ENCODE measurements at regions of chr5 and their contacts with region 1.

Region 1: GRCh38 chr5:33850100-33850594 is 41.6 kb downstream of the ADAMTS12 start:
- DNase-seq: peak; percentile 93 to 97
- H3K4me3 ChIP-seq: peak overlapping the region; percentile 31; the same call in 1 of the 2 replicates
- H3K27ac ChIP-seq: peak overlapping the region; percentile 88
- H3K4me1 ChIP-seq: peaks cover 55% of the 10 kb centered on the region
- H3K27me3 ChIP-seq: no peaks in the 10 kb centered on the region
- CTCF ChIP-seq: no peak

Region 2: DNA sequence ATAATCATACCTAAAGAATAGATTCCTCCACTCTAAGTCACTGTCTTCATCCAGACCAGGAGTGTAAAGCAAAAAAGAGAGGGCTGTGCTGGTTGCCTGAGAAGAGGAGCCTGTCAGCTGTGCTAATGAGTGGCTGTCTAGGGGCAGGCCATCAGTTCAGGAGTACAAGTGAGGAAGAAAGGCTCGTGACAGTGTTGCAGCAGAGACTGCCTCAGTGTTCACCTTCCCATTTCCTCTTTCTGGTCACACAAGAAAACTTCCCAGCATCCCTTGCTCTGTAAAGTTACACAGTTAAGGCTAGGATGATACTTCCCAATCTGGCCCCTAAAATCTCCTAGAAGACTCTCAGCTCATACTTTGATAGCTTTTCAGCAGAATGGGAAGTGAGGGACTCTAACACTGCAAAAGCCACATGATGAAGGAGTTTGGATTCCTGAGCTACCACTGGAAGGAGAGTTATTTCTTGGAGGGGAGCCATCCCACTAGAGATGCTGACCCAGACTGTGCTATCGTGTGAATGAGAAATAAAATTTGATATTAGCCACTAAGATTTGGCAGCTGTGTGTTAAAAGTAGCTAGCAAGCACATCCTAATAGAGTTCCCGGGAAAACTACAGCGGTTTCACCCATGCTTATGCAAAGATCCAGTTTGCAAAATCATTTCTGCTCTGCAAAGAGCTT is 25.5 kb before region 1 on chr5:
- CTCF ChIA-PET with region 1: no interaction called
- POLR2A ChIA-PET with region 1: interaction called, 3 read pairs
- intact Hi-C with region 1: loop called (anchors 1 kb)
- DNase-seq: no peak
- H3K4me3 ChIP-seq: no peak overlapping the region
- H3K27ac ChIP-seq: no peak overlapping the region
- H3K4me1 ChIP-seq: peaks cover 24% of the 10 kb centered on the region
- H3K27me3 ChIP-seq: no peaks in the 10 kb centered on the region
- CTCF ChIP-seq: no peak

Region 3: DNA sequence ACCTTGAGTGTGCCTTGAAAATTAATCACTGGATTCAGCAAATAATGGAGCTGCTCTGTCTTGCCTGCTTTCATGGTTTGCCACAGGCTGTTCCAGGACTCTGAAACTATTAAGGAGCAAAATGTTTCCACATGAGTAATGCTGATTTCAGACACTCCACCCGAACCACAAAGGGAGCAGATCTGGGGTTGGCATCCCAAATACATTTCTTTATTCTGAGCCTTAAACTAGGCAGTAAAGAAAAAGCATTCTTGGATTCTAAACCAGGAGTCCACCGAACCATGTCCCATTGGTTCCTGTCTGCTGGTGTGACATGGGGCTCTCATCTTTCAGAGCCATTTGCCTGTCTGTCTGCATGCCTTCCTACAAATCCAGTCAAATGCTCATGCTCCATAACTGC is 203.0 kb after region 1 on chr5:
- CTCF ChIA-PET with region 1: no interaction called
- POLR2A ChIA-PET with region 1: no interaction called
- intact Hi-C with region 1: no loop called
- DNase-seq: no peak
- H3K4me3 ChIP-seq: no peak overlapping the region
- H3K27ac ChIP-seq: no peak overlapping the region
- H3K4me1 ChIP-seq: no peaks in the 10 kb centered on the region
- H3K27me3 ChIP-seq: no peaks in the 10 kb centered on the region
- CTCF ChIP-seq: no peak